ENCODE measurements at regions of chr10 and their contacts with region 1.

Region 1: DNA sequence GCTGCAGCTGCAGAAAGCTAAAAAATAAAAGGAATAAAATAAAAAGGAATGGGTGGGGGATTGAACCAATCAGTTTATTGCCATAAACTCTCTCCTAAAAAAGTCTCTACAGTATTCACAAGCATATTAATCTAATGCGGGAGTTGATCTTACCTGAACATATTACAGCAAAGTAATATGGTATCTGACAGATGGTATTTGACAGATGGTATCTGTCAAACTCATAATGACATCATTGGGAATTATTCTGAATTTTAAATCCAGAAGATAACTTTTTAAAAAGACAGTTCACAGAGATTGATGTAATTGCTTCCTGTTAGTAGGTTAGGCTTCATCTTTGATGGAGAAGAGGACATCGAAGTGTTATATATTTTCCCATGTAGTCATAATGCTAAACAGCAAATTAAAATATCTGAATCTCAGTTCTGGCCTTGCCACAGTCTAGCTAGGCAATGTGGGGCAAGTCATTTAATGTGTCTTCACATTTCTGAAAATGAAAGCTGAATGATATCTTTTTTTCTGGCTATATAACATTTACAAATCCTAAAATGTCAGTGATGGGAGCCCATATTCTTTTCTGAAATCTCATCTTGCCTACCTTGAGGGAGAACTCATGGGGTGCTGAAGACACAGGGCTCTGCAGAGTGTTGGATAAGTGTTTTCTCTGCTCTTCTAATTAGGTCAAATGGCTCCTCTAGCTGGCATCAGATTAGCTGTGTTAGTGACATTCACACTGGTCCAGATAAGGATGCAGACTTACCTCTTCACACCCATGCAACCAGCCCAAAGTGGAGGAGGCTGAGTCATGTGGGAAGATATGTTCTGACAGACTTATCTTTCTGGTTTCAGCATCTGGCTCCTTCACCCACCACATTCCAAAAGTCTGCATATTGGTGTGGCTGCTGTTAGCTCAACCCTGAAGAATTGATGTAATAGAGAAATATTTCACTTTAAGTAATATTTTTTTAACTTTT is 2.1 kb upstream of the LIPM start:
- DNase-seq: no peak
- H3K4me3 ChIP-seq: no peak overlapping the region
- H3K27ac ChIP-seq: no peak overlapping the region
- H3K4me1 ChIP-seq: no peaks in the 10 kb centered on the region
- H3K27me3 ChIP-seq: no peaks in the 10 kb centered on the region
- CTCF ChIP-seq: no peak

Region 2: DNA sequence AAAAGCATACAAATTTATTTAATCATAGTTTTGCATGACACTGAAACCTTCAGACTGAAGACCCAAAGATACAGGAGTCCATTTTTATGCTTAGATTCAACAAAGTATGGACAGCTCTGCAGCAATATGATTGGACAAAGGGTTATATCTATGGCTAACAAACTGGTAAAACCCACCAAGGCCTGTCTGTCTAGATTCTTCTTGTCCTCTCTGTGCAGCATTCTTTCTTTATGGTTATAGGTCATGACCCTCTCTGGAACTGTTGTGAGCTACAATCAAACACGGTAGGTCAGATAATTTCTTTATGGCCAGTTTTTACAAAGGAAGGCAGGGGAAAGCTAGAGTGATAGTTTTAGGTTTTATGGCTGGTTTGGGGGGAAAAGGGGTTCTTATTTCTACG is 221.4 kb before region 1 on chr10:
- intact Hi-C with region 1: loop called (anchors 10 kb)
- DNase-seq: no peak
- H3K4me3 ChIP-seq: no peak overlapping the region
- H3K27ac ChIP-seq: no peak overlapping the region
- H3K4me1 ChIP-seq: no peaks in the 10 kb centered on the region
- H3K27me3 ChIP-seq: no peaks in the 10 kb centered on the region
- CTCF ChIP-seq: no peak

Region 3: GRCh38 chr10:88687853-88688467 is 112.5 kb before region 1 on chr10:
- intact Hi-C with region 1: loop called (anchors 5 kb)
- DNase-seq: no peak
- H3K4me3 ChIP-seq: no peak overlapping the region
- H3K27ac ChIP-seq: no peak overlapping the region
- H3K4me1 ChIP-seq: no peaks in the 10 kb centered on the region
- H3K27me3 ChIP-seq: no peaks in the 10 kb centered on the region
- CTCF ChIP-seq: peak; percentile 74

Measured in colonic mucosa (tissue), 4 donors.